H1 (cell line): ENCODE measurements at regions of chr2 and their contacts with region 1.

Region 1: DNA sequence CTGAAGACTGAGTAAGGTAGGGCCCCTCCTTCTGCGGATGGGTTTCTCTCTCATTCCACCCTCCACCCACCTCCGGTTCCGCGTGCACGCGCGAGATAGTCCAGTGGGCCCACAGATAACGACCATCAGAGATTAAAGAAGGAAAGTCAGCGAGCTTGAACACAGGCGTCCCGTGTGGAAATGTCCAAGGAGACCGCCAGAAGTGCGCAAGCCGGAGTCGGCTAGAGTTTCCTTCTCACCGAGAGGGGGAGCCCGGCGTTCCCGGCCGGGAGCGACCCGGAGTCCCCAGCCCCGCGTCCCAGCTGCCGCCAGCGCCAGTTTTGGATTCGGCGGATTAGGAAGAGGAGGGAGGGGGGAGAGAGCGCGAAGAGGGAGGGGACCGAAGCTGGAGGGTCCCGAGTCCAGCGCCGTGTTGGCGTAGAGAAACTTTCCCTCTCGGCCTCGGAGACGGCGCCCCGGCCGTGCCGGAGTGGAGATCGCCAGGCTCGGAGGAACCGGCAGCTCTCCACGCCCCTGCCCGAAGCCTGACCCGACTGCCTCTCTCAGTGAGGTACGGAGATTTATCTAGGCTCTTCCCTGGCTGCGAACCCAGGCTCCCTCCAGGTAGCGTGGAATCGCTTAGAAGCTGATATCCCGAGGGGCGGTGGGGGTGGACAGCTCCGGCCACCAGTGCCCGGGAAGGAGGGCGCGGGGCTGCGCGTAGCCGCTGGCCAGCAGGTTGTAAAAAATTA is at the start of gene GULP1:
- DNase-seq: peak in 1 of 2 experiments; percentile 84
- H3K4me3 ChIP-seq: peak within 1 kb of the TSS; percentile 85 to 97 (median 94)
- H3K27ac ChIP-seq: peak within 1 kb of the TSS; percentile 95
- H3K4me1 ChIP-seq: no peaks in the 10 kb centered on the region; a peak in 1 of 7 replicates
- H3K27me3 ChIP-seq: no peaks in the 10 kb centered on the region
- CTCF ChIP-seq: peak; percentile 54 to 72 (median 68)
- EP300 ChIP-seq: peak in 1 of 2 experiments; percentile 41; a peak in 1 of 3 replicates
- POLR2A ChIP-seq: no peak; a peak in 1 of 3 replicates
- RAD21 ChIP-seq: peak; percentile 64 to 72
- total RNA-seq, gene GULP1: 130 and 139 TPM in 2 replicates

Region 2: DNA sequence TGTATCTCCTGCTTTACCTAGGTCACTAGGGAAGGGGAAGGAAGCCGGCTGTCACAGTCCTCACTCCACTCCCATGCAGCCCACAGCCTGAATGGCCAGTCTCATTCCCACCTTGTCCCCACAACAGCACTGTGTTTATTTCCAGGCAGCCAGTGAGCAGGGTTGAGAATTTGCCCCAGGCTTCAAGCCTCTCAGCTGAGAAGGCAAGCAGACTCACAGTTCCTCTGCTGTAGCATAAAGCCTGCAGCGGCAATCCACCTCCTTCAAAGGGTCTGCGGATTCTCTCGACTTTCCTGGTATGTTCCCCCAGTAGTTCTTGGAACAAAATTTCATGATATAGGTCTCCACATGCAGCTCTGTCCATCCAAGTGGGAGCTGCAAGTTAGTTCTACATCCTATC is 263.0 kb before region 1 on chr2:
- CTCF ChIA-PET with region 1: no interaction called
- POLR2A ChIA-PET with region 1: interaction called, 13 read pairs
- DNase-seq: no peak
- H3K4me3 ChIP-seq: no peak overlapping the region
- H3K27ac ChIP-seq: 0 out of 2 replicates have a peak overlapping the region, but pooled peaks have one; percentile 22
- H3K4me1 ChIP-seq: peaks cover 5 to 22% (median 14%) of the 10 kb centered on the region in 4 experiments; a peak in 6 of 7 replicates
- H3K27me3 ChIP-seq: no peaks in the 10 kb centered on the region
- CTCF ChIP-seq: no peak
- EP300 ChIP-seq: no peak
- POLR2A ChIP-seq: no peak
- RAD21 ChIP-seq: no peak

Region 3: GRCh38 chr2:188280811-188281222 is 11.0 kb before region 1 on chr2:
- CTCF ChIA-PET with region 1: interaction called, 4 read pairs
- POLR2A ChIA-PET with region 1: interaction called, 22 read pairs
- DNase-seq: no peak
- H3K4me3 ChIP-seq: no peak overlapping the region
- H3K27ac ChIP-seq: no peak overlapping the region
- H3K4me1 ChIP-seq: peaks cover 0 to 12% (median 7%) of the 10 kb centered on the region in 4 experiments; a peak in 3 of 7 replicates
- H3K27me3 ChIP-seq: no peaks in the 10 kb centered on the region
- CTCF ChIP-seq: no peak
- EP300 ChIP-seq: no peak
- POLR2A ChIP-seq: no peak
- RAD21 ChIP-seq: no peak

Region 4: DNA sequence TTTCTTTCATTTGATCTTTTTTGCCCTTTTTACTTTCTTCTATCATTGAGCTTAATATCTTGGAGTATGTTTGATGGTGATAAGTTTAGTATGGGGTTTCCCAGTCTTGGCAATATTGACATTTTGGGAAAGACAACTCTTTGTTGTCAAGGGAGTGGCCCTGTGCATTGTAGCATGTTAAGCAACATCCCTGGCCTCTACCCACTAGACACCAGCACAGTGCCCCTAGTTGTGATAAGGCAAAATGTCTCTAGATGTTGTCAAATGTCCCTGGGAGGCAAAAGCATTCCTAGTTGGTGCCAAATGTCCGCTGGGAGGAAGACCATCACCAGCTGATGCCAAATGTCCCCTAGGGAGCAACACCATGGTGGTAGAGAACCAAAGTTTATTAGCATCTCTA is 28.0 kb after region 1 on chr2:
- CTCF ChIA-PET with region 1: interaction called, 15 read pairs
- POLR2A ChIA-PET with region 1: interaction called, 20 read pairs
- DNase-seq: no peak
- H3K4me3 ChIP-seq: no peak overlapping the region
- H3K27ac ChIP-seq: no peak overlapping the region
- H3K4me1 ChIP-seq: peaks cover 0 to 11% (median 8%) of the 10 kb centered on the region in 4 experiments; a peak in 5 of 7 replicates
- H3K27me3 ChIP-seq: no peaks in the 10 kb centered on the region
- CTCF ChIP-seq: peak in 2 of 3 experiments; percentile 5 to 60; a peak in 2 of 4 replicates
- EP300 ChIP-seq: no peak
- POLR2A ChIP-seq: no peak
- RAD21 ChIP-seq: peak; percentile 18 to 45; a peak in 2 of 4 replicates

Region 5: GRCh38 chr2:188345020-188345419 is 53.2 kb after region 1 on chr2:
- CTCF ChIA-PET with region 1: interaction called, 3 read pairs
- POLR2A ChIA-PET with region 1: interaction called, 10 read pairs
- DNase-seq: no peak
- H3K4me3 ChIP-seq: no peak overlapping the region
- H3K27ac ChIP-seq: no peak overlapping the region
- H3K4me1 ChIP-seq: peaks cover 3 to 10% (median 7%) of the 10 kb centered on the region in 4 experiments; a peak in 5 of 7 replicates
- H3K27me3 ChIP-seq: no peaks in the 10 kb centered on the region
- CTCF ChIP-seq: no peak
- EP300 ChIP-seq: no peak
- POLR2A ChIP-seq: no peak
- RAD21 ChIP-seq: no peak

Region 6: DNA sequence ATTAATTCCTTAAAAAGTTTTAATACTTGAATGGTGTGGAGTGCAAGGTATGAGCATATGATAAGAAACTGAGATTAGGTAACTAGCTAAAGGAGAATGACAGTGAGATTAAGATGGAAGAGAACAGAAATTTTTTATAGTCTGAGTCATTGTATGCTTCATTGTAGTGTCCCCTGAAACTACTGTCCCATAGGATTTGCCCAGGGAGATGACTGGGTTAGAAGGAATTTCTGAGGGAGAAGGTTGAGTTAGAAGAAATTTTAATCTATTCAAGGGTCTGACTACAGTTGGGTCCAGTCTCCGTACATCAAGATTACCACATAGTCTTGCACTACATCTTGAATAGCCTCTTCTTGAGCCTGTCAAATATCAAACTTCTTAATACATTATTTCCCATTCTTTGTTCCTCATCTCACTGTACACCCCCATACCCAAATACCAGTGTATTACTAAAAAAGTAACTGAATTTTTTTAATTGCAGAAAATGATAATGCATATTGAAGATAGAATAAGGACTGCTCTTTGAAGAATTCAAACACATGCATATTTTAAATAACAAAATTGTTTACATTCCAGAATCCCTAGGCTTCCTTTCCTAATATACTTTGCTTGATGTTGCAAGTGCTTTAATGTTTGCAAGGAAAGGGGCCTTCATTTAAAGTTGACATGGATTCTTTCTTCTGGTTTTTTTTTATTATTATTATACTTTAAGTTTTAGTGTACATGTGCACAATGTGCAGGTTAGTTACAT is 368.0 kb after region 1 on chr2:
- CTCF ChIA-PET with region 1: no interaction called
- POLR2A ChIA-PET with region 1: no interaction called
- DNase-seq: no peak
- H3K4me3 ChIP-seq: no peak overlapping the region
- H3K27ac ChIP-seq: no peak overlapping the region
- H3K4me1 ChIP-seq: no peaks in the 10 kb centered on the region
- H3K27me3 ChIP-seq: no peaks in the 10 kb centered on the region
- CTCF ChIP-seq: no peak
- EP300 ChIP-seq: no peak
- POLR2A ChIP-seq: no peak
- RAD21 ChIP-seq: no peak